T-cell (primary cell): ENCODE measurements at regions of chrX and their contacts with region 1.

Region 1: DNA sequence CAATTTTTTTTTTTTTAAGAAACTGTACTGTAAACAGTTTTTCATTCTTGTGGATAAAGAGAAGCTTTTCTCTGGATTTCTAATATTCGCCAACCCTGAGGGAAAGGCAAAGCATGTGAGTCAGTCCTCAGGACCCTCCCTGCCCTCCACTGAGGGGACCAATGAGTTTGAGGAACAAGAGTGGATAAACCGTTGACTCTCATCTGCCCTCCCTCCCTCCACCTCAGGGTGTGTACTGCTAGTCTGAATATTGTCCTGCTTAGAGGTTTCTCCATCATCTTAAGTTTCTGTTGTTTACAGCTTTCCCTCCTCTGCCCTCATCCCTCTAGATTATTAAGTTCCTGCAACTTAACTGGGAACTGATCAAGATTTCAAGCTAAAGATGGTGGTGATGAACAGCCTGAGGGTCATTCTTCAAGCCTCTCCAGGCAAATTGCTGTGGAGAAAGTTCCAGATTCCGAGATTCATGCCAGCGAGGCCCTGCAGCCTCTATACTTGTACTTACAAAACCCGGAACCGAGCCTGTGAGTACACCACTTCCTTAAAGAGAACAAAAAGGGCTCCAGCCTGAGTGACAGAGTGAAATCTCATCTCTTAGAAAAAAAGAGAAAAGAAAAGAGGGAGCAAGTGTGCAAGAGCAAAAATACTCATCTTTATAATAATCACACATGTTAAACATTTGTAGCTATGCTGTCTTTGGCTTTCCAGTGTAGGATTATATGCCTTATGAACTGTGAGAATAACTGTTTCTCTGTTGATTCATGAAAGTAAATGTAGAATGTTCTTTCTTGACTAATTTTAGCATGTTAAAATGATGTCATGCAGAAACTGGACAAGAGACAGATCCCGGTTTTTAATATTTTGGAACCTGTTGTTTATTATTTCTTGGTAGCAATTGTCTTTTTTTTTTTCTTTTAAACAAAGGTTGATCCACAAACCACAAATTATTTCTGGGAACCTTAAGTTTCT is 11.9 kb downstream of the CA5B start:
- DNase-seq: peak in 23 of 35 experiments; percentile 11 to 55 (median 22)
- ATAC-seq: peak; percentile 52 to 77 (median 72)
- H3K4me3 ChIP-seq: peak overlapping the region in 1 of 2 donors; percentile 30
- H3K4me3 Mint-ChIP-seq: peak overlapping the region; percentile 60 to 74 (median 69)
- H3K27ac ChIP-seq: peak overlapping the region; percentile 100
- H3K27ac Mint-ChIP-seq: peak overlapping the region; percentile 98 to 99
- H3K4me1 ChIP-seq: peaks cover 41 to 51% of the 10 kb centered on the region in 2 experiments
- H3K4me1 Mint-ChIP-seq: peaks cover 87 to 90% (median 88%) of the 10 kb centered on the region in 3 donors
- H3K27me3 ChIP-seq: no peaks in the 10 kb centered on the region
- H3K27me3 Mint-ChIP-seq: no peaks in the 10 kb centered on the region

Region 2: GRCh38 chrX:15737960-15738902 is 11.7 kb before region 1 on chrX and contains the start of gene CA5B:
- CTCF ChIA-PET with region 1: interaction called, 4 to 19 read pairs
- POLR2A ChIA-PET with region 1: interaction called, 32 to 48 read pairs
- DNase-seq: peak; percentile 86 to 100 (median 95)
- ATAC-seq: peak; percentile 92 to 96 (median 96)
- H3K4me3 ChIP-seq: peak within 1 kb of the TSS; percentile 66 to 91
- H3K4me3 Mint-ChIP-seq: peak within 1 kb of the TSS; percentile 90 to 91 (median 91)
- H3K27ac ChIP-seq: peak within 1 kb of the TSS; percentile 84
- H3K27ac Mint-ChIP-seq: peak within 1 kb of the TSS; percentile 82 to 84
- H3K4me1 ChIP-seq: peaks cover 13 to 35% of the 10 kb centered on the region in 2 experiments
- H3K4me1 Mint-ChIP-seq: peaks cover 48 to 55% (median 52%) of the 10 kb centered on the region in 3 donors
- H3K27me3 ChIP-seq: no peaks in the 10 kb centered on the region
- H3K27me3 Mint-ChIP-seq: no peaks in the 10 kb centered on the region
- total RNA-seq, gene CA5B: 34.2 to 80.9 (median 44.6) TPM

Region 3: DNA sequence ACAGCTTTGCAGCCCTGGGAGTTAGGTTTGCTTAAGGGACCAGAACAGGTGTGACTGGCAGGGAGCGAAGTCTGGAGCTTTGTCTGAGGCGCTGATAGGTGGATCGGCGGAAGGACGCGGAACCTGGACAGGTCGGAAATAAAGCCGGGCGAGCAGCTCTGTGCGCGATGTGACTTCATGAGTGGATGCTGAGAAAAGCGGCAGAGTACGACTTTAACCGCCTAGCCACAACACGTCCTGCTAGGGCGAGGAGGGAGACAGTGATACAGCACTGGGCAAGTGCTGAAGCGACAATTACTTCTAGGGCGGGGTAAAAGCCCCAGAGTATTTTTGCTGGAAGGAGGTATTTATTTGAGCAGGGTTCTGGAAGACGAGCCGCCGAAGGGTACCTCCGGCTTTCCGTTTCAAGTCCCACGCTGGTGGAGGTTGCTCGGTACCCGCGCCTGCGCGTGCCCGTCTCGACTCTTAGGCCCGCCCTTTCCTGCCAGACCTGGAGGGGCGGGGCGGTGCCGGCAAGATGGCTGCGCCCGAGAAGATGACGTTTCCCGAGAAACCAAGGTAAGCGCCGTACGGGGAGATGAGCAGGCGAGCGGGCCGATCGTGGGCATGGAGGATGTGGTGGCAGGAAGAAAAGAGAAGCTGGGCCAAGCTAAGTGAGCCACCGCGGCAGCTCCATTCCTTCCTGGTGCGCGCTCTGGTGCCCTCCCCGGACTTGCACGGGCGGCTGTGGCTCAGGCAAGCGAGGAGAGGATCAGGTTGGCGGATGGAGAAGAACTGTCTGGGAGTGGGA is 40.2 kb after region 1 on chrX and contains the start of gene ZRSR2:
- CTCF ChIA-PET with region 1: no interaction called
- POLR2A ChIA-PET with region 1: interaction called in 1 of 2 experiments, 11 read pairs
- DNase-seq: peak; percentile 79 to 95 (median 87)
- ATAC-seq: peak; percentile 90 to 97 (median 92)
- H3K4me3 ChIP-seq: peak within 1 kb of the TSS; percentile 66 to 85
- H3K4me3 Mint-ChIP-seq: no peak within 1 kb of the TSS
- H3K27ac ChIP-seq: peak within 1 kb of the TSS; percentile 92
- H3K27ac Mint-ChIP-seq: no peak within 1 kb of the TSS
- H3K4me1 ChIP-seq: peaks cover 9 to 22% of the 10 kb centered on the region in 2 experiments
- H3K4me1 Mint-ChIP-seq: peaks cover 25 to 34% (median 30%) of the 10 kb centered on the region in 3 donors
- H3K27me3 ChIP-seq: no peaks in the 10 kb centered on the region
- H3K27me3 Mint-ChIP-seq: no peaks in the 10 kb centered on the region
- total RNA-seq, gene ZRSR2: 18.5 to 35.4 (median 21.6) TPM

Region 4: DNA sequence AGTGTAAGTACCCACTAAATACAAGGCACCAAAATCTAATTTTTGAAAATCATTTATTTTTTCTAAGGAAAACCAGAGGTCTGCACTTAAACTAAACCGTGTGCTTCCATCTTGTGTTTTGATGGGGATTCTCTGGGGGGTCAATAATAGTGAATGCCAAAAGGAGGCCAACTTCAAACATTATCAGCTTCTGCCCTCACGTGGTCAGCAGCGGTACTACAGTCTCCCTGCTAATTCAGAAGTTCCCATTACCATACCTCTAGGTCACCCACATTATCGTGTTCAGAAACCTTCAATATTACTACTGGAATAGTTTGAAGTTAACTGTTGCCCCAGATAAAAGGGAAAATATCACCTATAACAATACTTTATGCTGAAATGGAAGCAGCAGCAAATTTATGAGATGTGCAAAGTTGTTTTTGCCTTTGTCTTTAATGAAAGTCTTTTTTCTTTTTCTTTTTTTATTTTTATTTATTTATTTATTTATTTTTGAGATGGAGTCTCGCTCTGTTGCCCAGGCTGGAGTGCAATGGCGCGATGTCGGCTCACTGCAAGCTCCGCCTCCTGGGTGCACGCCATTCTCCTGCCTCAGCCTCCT is 945.3 kb after region 1 on chrX:
- CTCF ChIA-PET with region 1: no interaction called
- POLR2A ChIA-PET with region 1: no interaction called
- DNase-seq: peak in 29 of 35 experiments; percentile 11 to 77 (median 47)
- ATAC-seq: peak in 3 of 4 experiments; percentile 61 to 78 (median 70)
- H3K4me3 ChIP-seq: no peak overlapping the region
- H3K4me3 Mint-ChIP-seq: no peak overlapping the region
- H3K27ac ChIP-seq: no peak overlapping the region
- H3K27ac Mint-ChIP-seq: no peak overlapping the region
- H3K4me1 ChIP-seq: no peaks in the 10 kb centered on the region
- H3K4me1 Mint-ChIP-seq: no peaks in the 10 kb centered on the region
- H3K27me3 ChIP-seq: no peaks in the 10 kb centered on the region
- H3K27me3 Mint-ChIP-seq: peaks cover 0 to 3% of the 10 kb centered on the region in 2 donors